ENCODE measurements at regions of chr21 and their contacts with region 1.

Region 1: DNA sequence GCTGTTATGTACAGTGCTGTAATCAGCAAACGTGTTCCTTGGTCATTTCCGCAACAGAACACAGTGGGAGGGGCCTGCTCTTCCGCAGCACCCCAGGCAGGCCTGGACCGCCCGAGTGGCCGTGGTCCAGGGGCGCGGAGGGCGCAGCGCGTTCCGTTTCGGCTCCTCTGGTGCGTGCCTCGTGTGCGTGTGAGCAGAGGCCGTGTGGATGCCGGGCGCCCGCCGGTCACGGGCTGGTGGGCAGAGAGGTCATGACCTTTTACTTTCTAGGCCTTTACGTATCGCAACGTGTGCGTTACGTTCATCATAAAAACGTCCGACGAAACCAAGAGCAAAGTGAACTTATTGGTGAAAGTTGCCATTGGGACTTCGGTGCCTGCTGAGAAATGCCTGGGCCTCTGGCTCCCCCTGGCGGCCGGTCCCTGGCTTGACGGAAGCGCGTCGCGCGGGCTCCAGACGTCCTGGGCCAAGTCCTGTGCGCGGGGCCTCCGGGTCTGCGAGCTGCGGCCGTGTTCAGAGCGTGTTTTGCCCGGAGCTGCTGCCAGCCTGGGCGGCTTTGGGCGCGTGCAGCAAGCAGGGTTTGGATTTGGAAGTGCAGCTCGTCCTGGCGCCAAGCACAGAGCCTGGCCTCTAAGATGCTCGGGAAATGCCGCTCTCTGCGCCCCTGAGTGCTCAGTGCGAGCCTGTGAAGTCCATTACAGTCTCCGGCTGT is 34.4 kb downstream of the COL18A1 start:
- DNase-seq: peak; percentile 79 to 91 (median 84)
- ATAC-seq: peak; percentile 71 to 88 (median 82)
- H3K4me3 ChIP-seq: peak overlapping the region in 11 of 12 donors; percentile 2 to 58 (median 43)
- H3K27ac ChIP-seq: peak overlapping the region; percentile 56 to 91 (median 80)
- H3K4me1 ChIP-seq: peaks cover 3 to 30% (median 16%) of the 10 kb centered on the region in 12 donors
- H3K27me3 ChIP-seq: no peaks in the 10 kb centered on the region
- CTCF ChIP-seq: peak; percentile 95 to 99 (median 98)
- POLR2A ChIP-seq: peak in 1 of 2 donors; percentile 42

Region 2: DNA sequence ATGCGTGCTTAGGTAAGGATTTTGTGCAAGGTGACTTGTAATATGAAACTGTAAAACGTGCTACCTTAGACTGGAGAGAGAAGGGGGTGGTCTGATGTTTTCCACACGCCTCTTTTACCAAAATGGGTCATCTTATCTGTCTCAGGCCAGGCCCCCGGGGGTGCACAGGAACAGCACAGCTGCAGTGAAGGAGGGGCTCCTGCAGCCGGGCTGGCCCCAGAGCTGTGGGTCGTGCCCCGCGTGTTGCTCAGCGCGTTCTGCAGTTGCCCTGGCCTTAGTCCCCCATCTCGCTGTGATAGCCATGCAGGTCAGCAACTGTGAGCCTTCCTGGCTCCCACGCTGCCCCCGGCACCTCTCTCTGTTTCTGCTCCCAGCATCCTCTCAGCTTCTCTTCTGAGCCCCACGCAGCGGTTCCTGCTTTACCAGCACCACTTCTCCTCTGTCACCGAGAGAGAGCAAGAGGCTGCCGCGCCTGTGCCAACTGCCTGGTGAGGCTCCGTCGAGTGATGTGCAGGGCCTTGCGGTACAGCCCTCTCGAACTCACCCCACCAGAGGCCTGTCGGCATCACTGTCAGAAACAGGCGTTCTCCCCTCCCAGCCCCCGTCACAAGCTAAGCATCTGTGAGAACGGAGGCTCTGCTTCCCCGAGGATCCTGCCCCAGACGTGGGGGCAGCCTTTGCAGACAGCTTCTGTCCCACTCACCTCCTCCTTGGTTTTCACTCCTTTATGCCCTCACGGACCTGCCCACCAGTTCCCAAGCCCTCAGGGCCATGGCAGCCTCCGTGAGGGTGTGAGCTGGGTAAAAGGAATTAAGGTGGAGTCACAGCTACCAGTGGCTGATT is 291.6 kb before region 1 on chr21:
- intact Hi-C with region 1: loop called in 6 of 10 experiments (anchors 5 to 10 kb)
- DNase-seq: peak in 1 of 5 donors; percentile 14
- ATAC-seq: no peak
- H3K4me3 ChIP-seq: no peak overlapping the region
- H3K27ac ChIP-seq: no peak overlapping the region
- H3K4me1 ChIP-seq: peaks cover 0 to 16% (median 4%) of the 10 kb centered on the region in 12 donors
- H3K27me3 ChIP-seq: no peaks in the 10 kb centered on the region
- CTCF ChIP-seq: no peak
- POLR2A ChIP-seq: no peak

Region 3: GRCh38 chr21:45270306-45270821 is 169.0 kb before region 1 on chr21:
- intact Hi-C with region 1: no loop called
- DNase-seq: peak in 1 of 5 donors; percentile 36
- ATAC-seq: no peak
- H3K4me3 ChIP-seq: no peak overlapping the region
- H3K27ac ChIP-seq: no peak overlapping the region
- H3K4me1 ChIP-seq: peaks cover 0 to 4% (median 0%) of the 10 kb centered on the region in 12 donors
- H3K27me3 ChIP-seq: no peaks in the 10 kb centered on the region
- CTCF ChIP-seq: peak in 1 of 12 donors; percentile 7
- POLR2A ChIP-seq: no peak

Region 4: DNA sequence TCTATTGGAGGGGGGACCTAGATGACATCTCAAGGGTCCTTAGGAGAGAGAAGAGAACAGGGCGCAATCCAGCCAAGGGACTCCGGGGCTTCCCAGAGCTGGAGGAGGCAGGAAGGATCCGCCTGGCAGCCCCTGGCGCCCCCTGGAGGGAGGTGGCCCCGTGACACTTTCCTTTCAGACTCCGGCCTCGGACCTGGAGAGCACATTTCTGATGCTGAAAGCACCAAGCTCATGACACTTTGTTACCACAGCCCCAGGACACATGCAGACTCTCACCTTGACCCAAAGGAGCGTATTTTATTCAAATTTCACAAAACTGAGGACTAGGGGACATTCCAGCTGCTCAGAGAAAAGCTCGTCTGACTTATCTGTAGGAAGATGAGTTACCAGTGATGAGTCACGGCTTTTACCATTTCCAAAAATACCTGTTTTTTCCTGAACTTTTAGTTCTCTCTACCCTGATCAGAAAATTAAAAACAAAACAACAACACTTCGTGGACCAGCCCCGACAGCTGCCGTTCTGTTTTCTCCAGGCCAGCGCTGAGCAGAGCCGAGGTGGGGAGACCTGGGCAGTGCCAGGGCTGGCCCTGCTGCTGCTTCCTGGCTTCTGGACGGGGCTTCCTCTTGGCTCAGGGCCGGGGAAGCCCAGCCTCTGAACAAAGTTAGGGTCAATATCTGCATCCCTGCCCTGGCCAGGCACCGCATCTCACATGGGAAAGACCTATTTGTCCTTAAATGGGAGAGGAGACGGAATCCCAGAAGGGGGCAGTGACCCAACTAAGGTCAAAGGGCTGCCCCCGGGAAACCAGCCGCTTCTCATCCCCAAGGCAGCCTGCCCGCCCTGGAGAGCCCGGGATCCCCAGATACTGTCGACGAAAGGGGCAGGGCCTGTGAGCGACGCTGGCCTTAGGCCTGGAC is 130.0 kb before region 1 on chr21:
- intact Hi-C with region 1: loop called in 2 of 10 experiments (anchors 5 kb)
- DNase-seq: peak; percentile 72 to 83 (median 78)
- ATAC-seq: peak; percentile 8 to 59 (median 26)
- H3K4me3 ChIP-seq: no peak overlapping the region
- H3K27ac ChIP-seq: peak overlapping the region; percentile 39 to 81 (median 63)
- H3K4me1 ChIP-seq: peaks cover 4 to 42% (median 26%) of the 10 kb centered on the region in 12 donors
- H3K27me3 ChIP-seq: no peaks in the 10 kb centered on the region
- CTCF ChIP-seq: peak; percentile 51 to 85 (median 70)
- POLR2A ChIP-seq: no peak

Region 5: GRCh38 chr21:45386721-45387371 is 52.5 kb before region 1 on chr21:
- intact Hi-C with region 1: loop called in 9 of 10 experiments (anchors 1 to 10 kb)
- DNase-seq: peak; percentile 36 to 70 (median 58)
- ATAC-seq: peak; percentile 48 to 73 (median 68)
- H3K4me3 ChIP-seq: no peak overlapping the region
- H3K27ac ChIP-seq: peak overlapping the region in 9 of 12 donors; percentile 5 to 56 (median 34)
- H3K4me1 ChIP-seq: peaks cover 0 to 21% (median 17%) of the 10 kb centered on the region in 12 donors
- H3K27me3 ChIP-seq: no peaks in the 10 kb centered on the region
- CTCF ChIP-seq: peak in 10 of 12 donors; percentile 15 to 52 (median 39)
- POLR2A ChIP-seq: no peak

Region 6: DNA sequence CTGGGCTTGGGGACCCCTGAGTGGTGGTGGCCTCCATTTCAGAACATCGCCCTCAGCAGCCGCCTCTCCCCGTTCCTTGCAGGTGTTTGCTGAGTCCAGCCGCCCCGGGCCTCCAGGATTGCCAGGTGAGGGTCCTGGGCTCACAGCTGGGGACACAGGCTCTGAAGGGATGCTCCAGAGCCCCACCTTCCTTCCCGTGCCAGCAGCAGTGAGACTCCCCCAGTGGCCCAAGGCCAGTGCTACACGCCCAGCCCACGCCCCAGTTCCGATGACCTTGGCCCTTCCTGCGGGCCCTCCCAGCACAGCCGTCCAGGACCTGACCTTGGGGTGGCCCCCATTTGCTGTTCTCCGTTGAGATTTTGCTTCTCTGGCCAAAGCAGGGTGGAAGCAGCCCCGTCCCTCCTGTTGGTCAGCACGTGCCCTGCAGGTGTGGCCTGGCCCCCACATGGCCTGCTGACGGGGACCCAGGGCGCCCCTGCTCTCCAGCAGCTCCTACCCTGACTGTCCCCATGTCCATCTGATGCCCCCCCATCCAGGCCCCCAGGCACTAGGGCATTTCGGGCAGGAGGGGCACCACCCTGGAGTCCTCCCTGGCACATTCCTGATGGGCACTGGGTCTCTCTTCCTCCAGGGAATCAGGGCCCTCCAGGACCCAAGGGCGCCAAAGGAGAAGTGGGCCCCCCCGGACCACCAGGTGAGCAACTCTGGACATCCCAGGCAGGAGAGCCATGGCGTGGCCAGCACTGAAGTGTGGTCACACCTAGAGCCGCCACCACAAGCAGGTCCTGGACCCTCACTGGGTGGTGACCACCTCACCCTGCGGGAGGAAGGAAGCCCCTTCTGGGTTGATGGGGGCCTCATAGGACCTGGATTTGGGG is 57.9 kb after region 1 on chr21:
- intact Hi-C with region 1: no loop called
- DNase-seq: peak in 4 of 5 donors; percentile 11 to 38 (median 19)
- ATAC-seq: no peak
- H3K4me3 ChIP-seq: no peak overlapping the region
- H3K27ac ChIP-seq: no peak overlapping the region
- H3K4me1 ChIP-seq: no peaks in the 10 kb centered on the region
- H3K27me3 ChIP-seq: no peaks in the 10 kb centered on the region
- CTCF ChIP-seq: no peak
- POLR2A ChIP-seq: no peak

Region 7: DNA sequence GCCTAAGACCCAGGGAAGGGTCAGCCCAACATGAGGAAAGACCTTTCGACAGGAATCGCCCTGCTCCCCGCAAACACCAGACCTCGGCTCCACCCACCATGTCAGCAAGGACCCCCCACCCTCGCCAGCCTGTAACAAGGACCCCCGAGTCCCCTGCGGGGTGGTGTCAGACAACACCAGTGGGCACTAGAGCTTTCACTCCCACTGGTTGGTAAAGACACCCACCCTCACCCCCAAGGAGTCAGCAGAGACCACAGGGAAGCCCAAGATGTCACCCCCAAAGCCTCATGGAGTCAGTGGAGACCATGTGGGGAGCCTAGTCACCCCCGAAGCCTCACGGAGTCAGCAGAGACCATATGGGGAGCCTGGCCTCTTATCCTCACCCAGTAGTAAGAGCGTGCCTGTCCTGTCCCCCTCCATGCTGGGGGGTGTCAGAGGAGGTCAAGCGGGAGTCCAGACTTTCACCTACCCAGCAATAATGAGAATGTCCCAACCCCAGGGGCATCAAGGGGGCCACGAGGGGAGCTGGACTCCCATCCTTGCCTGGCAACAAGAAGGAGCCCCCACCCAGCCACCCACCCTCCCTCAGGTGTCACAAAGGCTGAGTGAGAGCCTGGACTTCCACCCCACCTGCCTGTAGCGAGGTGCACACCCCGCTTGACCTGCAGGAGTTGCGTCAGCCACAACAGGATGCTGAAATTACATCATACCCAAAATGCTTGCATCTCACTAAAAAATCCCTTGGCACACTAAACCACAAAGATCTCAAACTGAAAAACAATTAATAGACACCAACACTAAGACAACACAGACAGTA is 78.1 kb after region 1 on chr21:
- intact Hi-C with region 1: no loop called
- DNase-seq: peak in 3 of 5 donors; percentile 20 to 51 (median 28)
- ATAC-seq: no peak
- H3K4me3 ChIP-seq: no peak overlapping the region
- H3K27ac ChIP-seq: peak overlapping the region in 1 of 12 donors; percentile 77
- H3K4me1 ChIP-seq: peaks cover 0 to 9% (median 0%) of the 10 kb centered on the region in 12 donors
- H3K27me3 ChIP-seq: no peaks in the 10 kb centered on the region
- CTCF ChIP-seq: no peak
- POLR2A ChIP-seq: no peak